Heart right ventricle (tissue), 16 donors: ENCODE measurements at regions of chr13 and their contacts with region 1.

Region 1: DNA sequence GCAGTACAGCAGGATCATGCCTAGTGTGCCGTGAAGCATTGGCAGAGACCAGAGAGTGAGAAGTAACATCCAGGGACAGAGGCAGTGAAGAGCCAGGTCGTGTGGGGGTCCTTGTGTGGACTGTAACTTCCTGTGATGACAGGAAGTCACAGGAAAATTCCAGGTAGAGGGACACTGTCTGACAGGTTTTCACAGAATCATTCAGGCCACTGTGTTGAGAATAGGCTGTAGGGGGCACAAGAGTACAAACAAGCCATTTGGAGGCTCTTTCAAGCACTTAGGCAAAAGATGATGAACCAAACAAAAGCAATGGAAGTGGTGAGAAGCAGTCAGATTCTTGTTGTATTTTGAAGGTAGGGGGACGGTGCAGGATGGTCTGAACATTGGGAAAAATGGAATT is 46.4 kb downstream of the N4BP2L1 start:
- DNase-seq: peak in 1 of 2 donors; percentile 30
- ATAC-seq: peak in 6 of 8 donors; percentile 29 to 76 (median 58)
- H3K4me3 ChIP-seq: no peak overlapping the region
- H3K27ac ChIP-seq: no peak overlapping the region
- H3K4me1 ChIP-seq: no peaks in the 10 kb centered on the region
- H3K27me3 ChIP-seq: no peaks in the 10 kb centered on the region
- CTCF ChIP-seq: peak; percentile 34 to 73 (median 60)

Region 2: DNA sequence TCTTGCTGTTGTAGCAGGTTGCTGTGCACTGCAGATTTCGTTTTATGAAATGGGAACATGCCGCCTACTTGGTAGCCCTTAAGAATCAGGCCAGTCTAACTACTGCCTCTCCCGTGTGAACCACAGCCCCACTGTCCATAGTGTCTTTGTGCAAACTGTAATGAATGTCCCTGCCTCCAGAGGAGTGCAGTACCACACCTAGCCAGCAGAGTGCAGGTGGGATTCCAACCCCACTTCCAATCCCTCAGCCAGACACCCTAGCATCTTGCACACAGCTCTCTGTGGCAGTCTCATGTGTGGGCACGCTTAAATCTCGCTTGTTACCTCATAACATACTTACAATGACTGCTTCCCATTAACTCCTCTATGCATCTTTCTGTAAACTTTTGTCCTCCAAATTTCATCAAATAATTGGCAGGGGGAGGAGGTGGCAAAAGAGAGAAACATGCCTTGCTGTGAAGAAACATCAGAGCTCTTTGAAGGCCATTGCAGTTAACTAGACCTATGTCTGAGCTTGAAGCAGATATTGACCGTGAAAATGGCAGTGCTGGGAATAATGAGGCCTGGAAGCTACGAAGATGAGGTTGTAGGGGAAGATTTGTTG is 113.6 kb before region 1 on chr13:
- intact Hi-C with region 1: no loop called
- DNase-seq: no peak
- ATAC-seq: no peak
- H3K4me3 ChIP-seq: no peak overlapping the region
- H3K27ac ChIP-seq: peak overlapping the region in 1 of 10 donors; percentile 92
- H3K4me1 ChIP-seq: peaks cover 5 to 54% (median 33%) of the 10 kb centered on the region in 9 donors
- H3K27me3 ChIP-seq: no peaks in the 10 kb centered on the region
- CTCF ChIP-seq: peak; percentile 20 to 61 (median 47)

Region 3: DNA sequence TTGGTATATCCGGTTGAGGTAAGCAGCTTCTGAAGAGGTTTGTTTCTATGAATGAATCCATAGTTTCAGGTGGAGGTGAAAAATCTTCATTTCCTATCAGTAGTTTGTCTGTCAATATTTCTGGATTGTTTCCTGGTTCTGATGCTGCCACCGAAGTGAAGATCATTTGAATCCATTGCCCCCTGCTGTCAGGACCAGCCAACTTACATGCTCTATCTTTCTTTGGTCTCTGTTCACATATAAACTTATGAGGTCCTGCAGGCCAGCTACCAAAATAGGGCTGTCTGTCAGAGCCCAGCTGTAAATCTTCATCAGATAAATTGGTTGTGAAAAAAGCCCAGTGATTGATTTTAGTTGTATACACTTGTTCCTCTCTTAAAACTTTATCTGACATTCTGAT is 61.6 kb after region 1 on chr13:
- intact Hi-C with region 1: loop called in 2 of 10 experiments (anchors 10 kb)
- DNase-seq: no peak
- ATAC-seq: peak in 1 of 8 donors; percentile 34
- H3K4me3 ChIP-seq: no peak overlapping the region
- H3K27ac ChIP-seq: no peak overlapping the region
- H3K4me1 ChIP-seq: peaks cover 0 to 25% (median 0%) of the 10 kb centered on the region in 9 donors
- H3K27me3 ChIP-seq: no peaks in the 10 kb centered on the region
- CTCF ChIP-seq: peak in 6 of 9 donors; percentile 22 to 51 (median 42)

Region 4: DNA sequence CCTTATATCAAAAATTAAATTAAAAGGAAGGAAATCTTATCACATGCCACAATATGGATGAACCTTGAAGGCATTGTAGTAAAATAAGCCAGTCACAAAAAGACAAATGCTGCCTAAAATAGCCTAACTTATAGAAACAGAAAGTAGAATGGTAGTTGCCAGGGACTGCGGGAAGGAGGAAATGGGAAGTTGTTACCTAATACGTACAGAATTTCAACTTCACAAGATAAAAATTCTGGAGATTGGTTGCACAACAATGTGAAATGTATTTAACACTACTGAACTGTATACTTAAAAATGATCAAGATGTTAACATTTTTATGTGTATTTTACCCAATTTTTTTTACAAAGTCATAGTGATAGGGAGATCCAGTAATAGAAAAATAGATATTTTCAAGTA is 167.3 kb after region 1 on chr13:
- intact Hi-C with region 1: loop called in 1 of 10 experiments (anchors 10 kb)
- DNase-seq: no peak
- ATAC-seq: no peak
- H3K4me3 ChIP-seq: no peak overlapping the region
- H3K27ac ChIP-seq: peak overlapping the region in 1 of 10 donors; percentile 11
- H3K4me1 ChIP-seq: peaks cover 0 to 4% (median 0%) of the 10 kb centered on the region in 9 donors
- H3K27me3 ChIP-seq: no peaks in the 10 kb centered on the region
- CTCF ChIP-seq: no peak

Region 5: GRCh38 chr13:32581177-32581786 is 199.7 kb after region 1 on chr13:
- intact Hi-C with region 1: loop called (anchors 2 to 10 kb)
- DNase-seq: no peak
- ATAC-seq: no peak
- H3K4me3 ChIP-seq: no peak overlapping the region
- H3K27ac ChIP-seq: no peak overlapping the region
- H3K4me1 ChIP-seq: peaks cover 0 to 7% (median 5%) of the 10 kb centered on the region in 9 donors
- H3K27me3 ChIP-seq: no peaks in the 10 kb centered on the region
- CTCF ChIP-seq: peak; percentile 14 to 75 (median 63)

Region 6: GRCh38 chr13:32650705-32651311 is 269.3 kb after region 1 on chr13:
- intact Hi-C with region 1: loop called in 2 of 10 experiments (anchors 10 kb)
- DNase-seq: peak in 1 of 2 donors; percentile 53
- ATAC-seq: peak in 7 of 8 donors; percentile 49 to 85 (median 77)
- H3K4me3 ChIP-seq: no peak overlapping the region
- H3K27ac ChIP-seq: no peak overlapping the region
- H3K4me1 ChIP-seq: peaks cover 3 to 37% (median 26%) of the 10 kb centered on the region in 9 donors
- H3K27me3 ChIP-seq: no peaks in the 10 kb centered on the region
- CTCF ChIP-seq: peak in 8 of 9 donors; percentile 53 to 83 (median 72)